Activated naive CD4-positive, alpha-beta T cell treated with anti-CD3 and anti-CD28 coated beads for 36 hours (primary cell): ENCODE measurements at regions of chr5 and their contacts with region 1.

Region 1: DNA sequence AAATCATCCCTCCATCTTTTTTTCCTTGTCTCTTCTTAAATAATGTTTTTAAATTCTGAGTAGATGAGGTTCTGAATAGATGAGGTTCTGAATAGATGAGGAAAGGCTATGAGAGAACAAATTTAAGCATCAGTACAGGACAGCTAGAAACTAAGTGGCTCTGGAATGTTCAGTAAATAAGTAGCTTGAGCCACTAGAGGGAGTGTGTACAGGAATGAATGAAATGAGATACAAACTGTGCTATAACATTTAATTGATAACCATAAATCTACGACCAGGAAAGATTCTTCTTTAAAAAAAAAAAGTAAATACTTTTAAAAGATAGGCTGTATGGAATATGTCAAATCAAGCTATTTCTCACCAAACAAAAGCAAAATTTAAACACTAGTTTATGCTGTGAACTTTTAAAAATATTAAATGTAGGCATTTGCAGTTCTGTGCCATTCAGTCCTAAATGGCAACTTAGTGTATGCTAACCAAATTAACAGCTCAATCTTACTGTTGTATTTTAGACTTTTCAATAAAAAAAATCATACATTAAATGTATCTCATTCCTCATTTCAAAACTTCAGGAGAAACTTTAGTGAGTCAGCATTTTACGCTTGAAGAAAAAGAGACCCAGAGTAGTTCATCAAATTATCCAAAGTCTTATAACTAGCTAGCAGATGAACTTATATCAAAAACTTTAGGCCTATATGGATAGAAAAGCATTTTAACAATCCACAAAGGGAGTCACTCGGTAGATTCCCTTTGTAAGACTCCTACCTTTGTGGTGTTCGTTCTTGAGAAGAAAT is 70.4 kb upstream of the SNX2 start:
- DNase-seq: no peak
- H3K4me3 Mint-ChIP-seq: no peak overlapping the region
- H3K27ac Mint-ChIP-seq: no peak overlapping the region
- H3K4me1 Mint-ChIP-seq: peaks cover 4% of the 10 kb centered on the region
- H3K27me3 Mint-ChIP-seq: peaks cover 3% of the 10 kb centered on the region

Region 2: DNA sequence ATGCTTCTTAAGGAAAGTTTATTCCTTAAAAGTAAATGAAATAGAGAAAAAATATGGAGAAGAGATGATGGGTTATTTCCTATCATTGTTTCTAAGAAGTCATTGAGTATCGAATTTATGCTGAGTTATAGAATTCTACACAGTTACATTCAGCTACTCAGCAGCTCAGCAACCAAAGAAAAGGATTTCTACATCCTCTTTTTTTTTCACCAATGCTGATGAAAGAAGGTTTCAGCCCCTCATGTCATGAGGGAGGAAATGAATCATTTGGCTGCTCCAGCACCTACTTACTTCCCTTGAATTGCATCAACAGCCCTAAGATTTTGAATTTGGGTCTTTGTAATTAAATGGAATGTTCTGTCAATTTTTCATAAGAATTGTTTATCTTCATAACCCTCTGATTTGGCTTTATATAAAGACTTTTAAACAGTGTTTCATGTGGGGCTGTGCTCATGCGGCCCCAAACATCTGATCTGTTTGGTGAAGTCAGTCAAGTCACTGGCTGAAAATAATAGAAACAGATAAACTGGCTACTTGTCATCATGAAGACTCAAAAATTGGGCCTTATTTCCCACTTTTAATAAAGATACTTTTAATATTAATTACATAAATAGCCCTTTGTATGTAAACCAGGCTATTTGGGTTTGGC is 51.9 kb after region 1 on chr5:
- CTCF ChIA-PET with region 1: no interaction called
- intact Hi-C with region 1: loop called (anchors 5 kb)
- DNase-seq: no peak
- H3K4me3 Mint-ChIP-seq: no peak overlapping the region
- H3K27ac Mint-ChIP-seq: no peak overlapping the region
- H3K4me1 Mint-ChIP-seq: peaks cover 7% of the 10 kb centered on the region
- H3K27me3 Mint-ChIP-seq: peaks cover 3% of the 10 kb centered on the region

Region 3: DNA sequence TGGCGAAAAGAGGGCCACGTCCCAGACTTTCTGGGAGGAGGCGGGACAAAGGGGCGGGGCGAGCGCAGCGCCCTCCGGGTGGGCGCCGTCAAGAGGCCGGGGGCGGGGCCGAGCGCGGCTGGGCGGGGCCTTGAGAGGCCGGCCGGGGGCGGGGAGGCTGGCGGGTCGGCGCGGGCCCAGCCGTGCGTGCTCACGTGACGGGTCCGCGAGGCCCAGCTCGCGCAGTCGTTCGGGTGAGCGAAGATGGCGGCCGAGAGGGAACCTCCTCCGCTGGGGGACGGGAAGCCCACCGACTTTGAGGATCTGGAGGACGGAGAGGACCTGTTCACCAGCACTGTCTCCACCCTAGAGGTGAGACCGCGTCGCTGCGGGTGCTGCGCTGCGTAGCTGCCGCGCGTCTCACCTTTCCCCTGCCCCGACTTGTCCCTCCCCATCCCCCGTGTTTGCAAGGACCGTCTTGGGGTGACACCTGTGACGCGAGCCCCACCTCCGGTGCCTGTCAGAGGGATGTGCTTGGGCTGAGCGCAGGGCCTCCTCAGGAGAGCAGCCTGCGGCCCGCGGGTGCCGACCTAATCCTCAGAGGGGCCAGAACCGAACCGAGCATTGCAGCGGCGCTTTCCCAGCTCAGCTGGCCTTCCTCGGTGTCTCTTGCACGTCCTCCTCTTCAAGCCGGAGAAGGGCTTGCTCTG is 70.6 kb after region 1 on chr5 and contains the start of gene SNX2:
- CTCF ChIA-PET with region 1: interaction called, 3 read pairs
- intact Hi-C with region 1: loop called (anchors 5 kb)
- DNase-seq: peak; percentile 89
- H3K4me3 Mint-ChIP-seq: peak within 1 kb of the TSS; percentile 89
- H3K27ac Mint-ChIP-seq: peak within 1 kb of the TSS; percentile 78
- H3K4me1 Mint-ChIP-seq: peaks cover 24% of the 10 kb centered on the region
- H3K27me3 Mint-ChIP-seq: no peaks in the 10 kb centered on the region
- total RNA-seq, gene SNX2: 47.3 to 48.0 TPM

Region 4: GRCh38 chr5:122999945-123000563 is 295.6 kb after region 1 on chr5:
- CTCF ChIA-PET with region 1: no interaction called
- intact Hi-C with region 1: loop called (anchors 1 kb)
- DNase-seq: peak; percentile 58
- H3K4me3 Mint-ChIP-seq: no peak overlapping the region
- H3K27ac Mint-ChIP-seq: no peak overlapping the region
- H3K4me1 Mint-ChIP-seq: no peaks in the 10 kb centered on the region
- H3K27me3 Mint-ChIP-seq: no peaks in the 10 kb centered on the region